Mammary epithelial cell (primary cell): ENCODE measurements at regions of chr11 and their contacts with region 1.

Region 1: DNA sequence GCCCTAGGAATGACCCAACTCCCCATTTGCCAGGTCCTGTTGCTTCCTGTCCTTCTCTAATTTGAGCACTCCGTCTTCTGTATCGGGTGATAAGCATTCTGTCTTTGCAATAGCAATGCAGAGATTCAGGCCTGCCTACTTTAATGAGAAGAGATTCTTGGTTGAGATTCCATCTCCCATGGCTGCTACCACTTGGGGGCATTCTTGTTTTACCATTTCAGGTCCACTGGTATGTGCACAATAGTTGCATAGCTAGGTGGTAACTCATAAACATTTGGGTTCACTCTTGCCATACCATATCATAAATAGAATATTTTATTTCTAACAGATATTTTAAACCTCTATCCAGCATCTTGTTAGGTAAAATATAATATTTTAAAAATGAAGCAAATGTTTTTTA is 34.4 kb upstream of the CALCB start:
- DNase-seq: peak; percentile 24
- H3K4me3 ChIP-seq: no peak overlapping the region
- H3K27ac ChIP-seq: no peak overlapping the region
- H3K4me1 ChIP-seq: no peaks in the 10 kb centered on the region
- H3K27me3 ChIP-seq: no peaks in the 10 kb centered on the region
- CTCF ChIP-seq: peak; percentile 38 to 63

Region 2: DNA sequence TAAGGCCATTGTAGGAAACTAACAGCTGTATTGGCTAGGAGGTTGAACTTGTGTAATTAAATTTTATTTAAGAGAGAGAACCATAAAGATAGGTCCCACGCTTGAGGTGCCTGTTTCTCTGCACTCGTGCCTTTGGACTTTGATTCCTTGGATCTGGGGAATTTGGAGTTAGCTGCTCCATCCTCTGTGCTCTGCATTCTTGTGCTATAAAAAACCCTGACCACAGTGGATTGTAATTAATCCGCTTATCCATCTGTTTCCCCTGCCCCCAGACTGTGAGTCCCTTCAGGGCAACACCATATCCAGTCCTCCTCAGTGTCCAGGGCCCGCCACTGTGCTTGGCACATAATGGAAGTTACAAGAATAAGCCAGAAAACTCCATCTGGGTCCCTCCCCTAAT is 906.7 kb before region 1 on chr11:
- CTCF ChIA-PET with region 1: no interaction called
- dilution Hi-C with region 1: no loop called
- in situ Hi-C with region 1: no loop called
- intact Hi-C with region 1: no loop called
- DNase-seq: no peak
- H3K4me3 ChIP-seq: no peak overlapping the region
- H3K27ac ChIP-seq: no peak overlapping the region
- H3K4me1 ChIP-seq: no peaks in the 10 kb centered on the region
- H3K27me3 ChIP-seq: no peaks in the 10 kb centered on the region
- CTCF ChIP-seq: no peak

Region 3: GRCh38 chr11:15159085-15159484 is 120.1 kb after region 1 on chr11:
- CTCF ChIA-PET with region 1: no interaction called
- dilution Hi-C with region 1: no loop called
- in situ Hi-C with region 1: no loop called
- intact Hi-C with region 1: loop called (anchors 1 kb)
- DNase-seq: peak; percentile 39
- H3K4me3 ChIP-seq: no peak overlapping the region
- H3K27ac ChIP-seq: no peak overlapping the region
- H3K4me1 ChIP-seq: peaks cover 19% of the 10 kb centered on the region
- H3K27me3 ChIP-seq: no peaks in the 10 kb centered on the region
- CTCF ChIP-seq: peak; percentile 76 to 81